Dorsolateral prefrontal cortex (tissue), 120 donors: ENCODE measurements at regions of chr22 and their contacts with region 1.

Region 1: DNA sequence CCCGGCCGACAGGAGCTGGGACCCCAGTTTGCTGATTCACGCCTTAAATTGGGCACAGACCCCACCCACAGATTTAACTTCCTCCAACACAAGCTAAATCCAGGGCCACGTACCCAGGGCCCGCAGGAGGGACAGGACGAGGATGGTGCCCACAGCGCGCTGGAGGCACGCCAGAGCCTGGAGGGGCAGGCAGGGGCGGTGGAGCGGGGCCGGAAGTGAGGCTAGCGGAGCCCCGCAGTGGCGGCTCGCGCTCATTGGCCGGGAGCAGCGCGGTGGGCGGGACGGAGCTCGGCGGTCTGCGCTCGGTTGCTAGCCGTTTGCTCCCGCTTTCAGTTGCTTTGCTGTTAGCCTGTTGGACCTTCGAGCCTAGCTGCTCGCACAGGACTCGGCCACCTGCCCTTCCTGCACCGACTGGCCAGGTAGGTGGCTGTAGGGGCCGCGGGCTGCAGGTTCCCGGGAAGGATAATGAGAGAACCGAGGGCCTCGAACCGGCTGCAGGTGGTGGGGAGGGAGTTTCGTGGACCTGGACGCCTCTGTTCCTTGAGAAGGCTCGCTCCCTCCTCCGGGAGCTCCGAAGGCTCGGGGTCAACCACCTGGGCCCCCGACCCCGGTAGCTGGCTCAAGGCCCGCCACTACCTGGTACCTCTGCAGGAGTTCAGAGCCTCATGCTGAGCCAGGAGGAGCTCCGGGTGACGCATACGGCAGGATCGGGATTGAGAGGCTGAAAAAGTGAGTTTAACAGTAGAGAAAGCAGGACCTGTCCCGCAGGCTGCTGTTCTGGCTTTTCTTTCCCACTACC is at the start of gene CCDC134:
- DNase-seq: peak; percentile 83 to 97 (median 90)
- H3K4me3 ChIP-seq: peak within 1 kb of the TSS; percentile 63 to 99 (median 90)
- H3K27ac ChIP-seq: peak within 1 kb of the TSS; percentile 38 to 96 (median 89)
- H3K27me3 ChIP-seq: no peaks in the 10 kb centered on the region
- CTCF ChIP-seq: peak in 28 of 56 donors; percentile 6 to 51 (median 24)
- total RNA-seq, gene CCDC134: 4.1 to 13.3 (median 7.8) TPM

Region 2: GRCh38 chr22:41697126-41697775 is 103.3 kb before region 1 on chr22:
- intact Hi-C with region 1: loop called (anchors 5 to 10 kb)
- DNase-seq: peak; percentile 85 to 96 (median 92)
- H3K4me3 ChIP-seq: peak overlapping the region in 22 of 59 donors; percentile 4 to 41 (median 29)
- H3K27ac ChIP-seq: peak overlapping the region in 36 of 59 donors; percentile 4 to 82 (median 50)
- H3K27me3 ChIP-seq: no peaks in the 10 kb centered on the region
- CTCF ChIP-seq: peak; percentile 90 to 100 (median 97)

Region 3: GRCh38 chr22:41832553-41833368 is 32.2 kb after region 1 on chr22 and contains the start of gene SREBF2:
- intact Hi-C with region 1: loop called in 1 of 2 experiments (anchors 1 kb)
- DNase-seq: peak; percentile 99 to 100 (median 100)
- H3K4me3 ChIP-seq: peak within 1 kb of the TSS; percentile 50 to 98 (median 91)
- H3K27ac ChIP-seq: peak within 1 kb of the TSS; percentile 91 to 100 (median 99)
- H3K27me3 ChIP-seq: no peaks in the 10 kb centered on the region
- CTCF ChIP-seq: peak in 5 of 56 donors; percentile 3 to 10 (median 6)
- total RNA-seq, gene SREBF2: 129 to 246 (median 190) TPM

Region 4: DNA sequence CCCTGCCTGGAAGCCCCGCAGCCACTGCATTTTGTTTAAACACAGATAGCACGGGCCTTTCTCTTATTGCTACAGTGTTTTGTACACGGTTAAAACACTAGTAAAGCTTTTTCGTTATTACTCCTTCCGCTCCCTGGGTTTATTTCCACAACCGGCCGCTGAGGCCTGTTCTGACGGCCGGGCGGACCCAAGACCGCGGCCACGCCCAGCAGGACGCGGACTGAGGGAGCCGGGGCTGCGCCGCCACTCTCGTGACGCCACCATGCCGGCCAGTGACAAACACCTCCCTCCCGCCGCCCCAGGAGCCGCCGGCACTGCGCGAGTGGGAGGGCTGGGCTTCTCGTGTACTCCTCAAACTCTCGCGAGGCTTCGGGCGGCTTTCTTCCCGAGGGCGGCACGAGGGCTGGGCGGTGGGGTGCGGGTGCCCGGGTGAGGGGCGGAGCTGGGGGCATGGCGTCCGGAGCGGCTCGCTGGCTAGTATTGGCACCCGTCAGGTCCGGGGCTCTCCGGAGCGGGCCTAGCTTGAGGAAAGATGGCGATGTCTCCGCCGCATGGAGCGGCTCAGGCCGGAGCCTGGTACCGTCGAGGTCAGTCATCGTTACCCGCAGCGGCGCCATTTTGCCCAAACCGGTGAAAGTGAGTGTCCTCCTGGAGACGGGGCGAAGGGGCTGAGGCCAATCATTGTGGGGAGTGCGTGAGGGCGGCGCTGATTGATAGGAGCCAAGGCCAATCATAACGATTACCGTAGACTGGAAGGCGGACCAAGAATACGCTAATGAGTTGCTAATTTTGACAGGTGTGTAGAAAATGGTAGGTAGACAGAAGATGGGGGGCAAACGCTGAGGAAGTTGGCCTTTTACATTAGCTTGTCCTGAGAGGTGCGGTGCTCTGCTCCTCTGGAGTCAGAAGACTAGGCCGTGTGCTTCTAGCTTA is 279.0 kb after region 1 on chr22 and contains the start of gene SMDT1:
- intact Hi-C with region 1: no loop called
- DNase-seq: peak; percentile 97 to 100 (median 99)
- H3K4me3 ChIP-seq: peak within 1 kb of the TSS; percentile 59 to 92 (median 79)
- H3K27ac ChIP-seq: peak within 1 kb of the TSS; percentile 94 to 100 (median 99)
- H3K27me3 ChIP-seq: no peaks in the 10 kb centered on the region
- CTCF ChIP-seq: peak in 29 of 56 donors; percentile 4 to 56 (median 27)
- total RNA-seq, gene SMDT1: 58.2 to 115 (median 88.2) TPM